ENCODE measurements at regions of chr3 and their contacts with region 1.

Region 1: DNA sequence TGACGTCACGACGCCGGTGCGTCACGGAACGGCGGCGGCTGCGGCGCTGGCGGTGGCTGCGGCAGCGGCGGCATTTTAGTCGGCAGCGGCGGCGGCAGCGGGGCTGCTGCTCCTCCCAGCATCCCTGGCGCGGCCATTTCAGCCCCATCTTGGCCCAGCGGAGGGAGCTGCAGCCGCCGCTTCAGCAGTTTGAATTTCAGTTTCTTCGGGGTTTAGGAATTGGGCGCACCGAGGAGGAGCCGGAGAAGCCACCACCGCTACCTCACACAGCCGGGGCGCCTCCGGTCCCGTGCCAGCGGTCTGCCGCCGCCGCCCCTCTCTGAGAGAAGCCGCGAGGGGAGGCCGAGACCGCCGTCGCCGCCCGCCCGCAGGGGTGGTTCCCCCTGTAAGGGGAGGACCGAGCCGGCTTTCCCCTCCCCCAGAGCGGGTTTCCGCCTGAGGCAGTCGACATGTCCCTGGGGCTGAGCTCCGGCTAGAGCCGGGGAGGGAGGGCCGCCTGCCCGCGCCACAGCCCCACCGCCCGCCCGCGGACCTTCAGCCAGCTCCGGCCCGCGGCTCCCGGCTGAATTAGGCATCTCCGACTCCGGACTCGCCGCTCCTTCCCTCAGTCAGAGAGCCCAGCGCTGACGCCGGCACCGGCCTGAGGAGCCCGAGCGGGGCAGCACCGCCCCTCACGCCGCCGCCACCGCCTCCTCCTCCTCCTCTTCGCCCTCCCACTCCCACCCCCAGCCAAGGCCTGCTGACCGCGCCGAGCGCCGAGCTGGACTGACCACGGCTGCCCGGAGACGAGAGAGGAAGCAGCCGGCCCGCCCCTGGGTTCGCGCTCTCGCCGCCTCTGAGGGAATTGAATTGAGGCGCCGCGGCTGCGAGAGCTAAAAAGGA is at the start of gene TSC22D2:
- DNase-seq: no peak
- H3K4me3 ChIP-seq: peak within 1 kb of the TSS; percentile 99 to 100 (median 99)
- H3K27ac ChIP-seq: peak within 1 kb of the TSS; percentile 95
- H3K4me1 ChIP-seq: peaks cover 12% of the 10 kb centered on the region
- H3K27me3 ChIP-seq: no peaks in the 10 kb centered on the region
- CTCF ChIP-seq: peak in 2 of 3 experiments; percentile 10 to 12
- polyA plus RNA-seq, gene TSC22D2: 16.3 to 22.3 TPM (median 19.3 TPM) in 3 replicates

Region 2: DNA sequence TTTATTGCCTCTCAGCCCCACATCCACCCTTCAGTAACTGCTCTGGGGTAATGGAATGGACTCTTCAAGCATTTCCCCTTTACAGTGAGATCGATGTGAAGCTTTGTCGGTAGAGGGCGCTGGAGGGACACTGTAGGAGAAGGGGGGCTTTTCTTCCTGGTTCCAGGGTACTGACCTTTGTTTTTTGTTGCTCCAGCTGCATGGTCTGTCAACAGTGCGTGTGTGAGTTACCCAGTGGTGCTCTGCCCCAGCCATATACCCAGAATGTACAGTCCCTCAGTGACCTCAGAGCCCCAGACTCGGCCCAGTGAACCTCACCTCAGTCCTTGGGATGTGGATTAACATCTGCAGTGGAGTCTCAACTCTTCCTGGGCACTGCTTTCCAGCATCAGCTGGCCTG is 180.6 kb before region 1 on chr3:
- dilution Hi-C with region 1: loop called (anchors 25 kb)
- DNase-seq: no peak
- H3K4me3 ChIP-seq: no peak overlapping the region
- H3K27ac ChIP-seq: no peak overlapping the region
- H3K4me1 ChIP-seq: peaks cover 1% of the 10 kb centered on the region
- H3K27me3 ChIP-seq: peaks cover 6% of the 10 kb centered on the region
- CTCF ChIP-seq: peak; percentile 79 to 86 (median 85)

Region 3: GRCh38 chr3:150850191-150850590 is 441.7 kb after region 1 on chr3:
- dilution Hi-C with region 1: no loop called
- DNase-seq: no peak
- H3K4me3 ChIP-seq: no peak overlapping the region
- H3K27ac ChIP-seq: no peak overlapping the region
- H3K4me1 ChIP-seq: no peaks in the 10 kb centered on the region
- H3K27me3 ChIP-seq: no peaks in the 10 kb centered on the region
- CTCF ChIP-seq: no peak

Region 4: DNA sequence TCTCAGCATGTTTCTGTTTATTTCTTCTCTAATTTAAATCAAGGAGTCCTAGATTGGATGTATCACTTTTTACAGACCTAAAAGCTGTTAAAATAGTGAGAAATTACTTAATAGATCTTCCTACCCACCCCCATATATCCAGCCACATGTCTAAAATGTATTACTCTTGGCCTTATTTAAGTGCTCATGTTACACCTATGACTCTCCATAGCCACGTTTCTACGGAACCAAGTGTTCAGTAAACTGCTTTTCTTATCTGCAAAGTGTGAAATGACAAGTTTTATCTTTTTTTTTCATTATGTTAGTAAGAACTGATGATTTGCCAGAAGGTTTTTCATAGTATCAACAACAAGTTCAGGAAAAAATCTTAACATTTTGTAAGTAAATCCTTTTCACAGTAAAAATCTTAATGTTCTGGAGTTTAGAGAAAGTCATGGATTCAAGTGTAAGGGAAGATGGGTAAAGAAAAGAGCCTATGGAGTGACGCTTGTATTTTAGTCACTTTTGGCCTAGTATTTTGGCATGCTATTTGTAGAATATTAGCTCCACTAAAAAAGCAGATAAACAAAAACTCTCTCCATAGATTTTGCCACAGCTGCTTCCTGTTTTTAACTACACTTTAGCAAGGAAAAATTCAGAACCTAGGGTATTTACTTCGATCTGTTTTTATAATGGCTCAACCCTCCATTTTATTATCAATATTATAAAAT is 1093.6 kb after region 1 on chr3:
- dilution Hi-C with region 1: no loop called
- DNase-seq: no peak
- H3K4me3 ChIP-seq: no peak overlapping the region
- H3K27ac ChIP-seq: no peak overlapping the region
- H3K4me1 ChIP-seq: no peaks in the 10 kb centered on the region
- H3K27me3 ChIP-seq: no peaks in the 10 kb centered on the region
- CTCF ChIP-seq: no peak

Measured in keratinocyte (primary cell).